ENCODE measurements at regions of chr2 and their contacts with region 1.

Region 1: DNA sequence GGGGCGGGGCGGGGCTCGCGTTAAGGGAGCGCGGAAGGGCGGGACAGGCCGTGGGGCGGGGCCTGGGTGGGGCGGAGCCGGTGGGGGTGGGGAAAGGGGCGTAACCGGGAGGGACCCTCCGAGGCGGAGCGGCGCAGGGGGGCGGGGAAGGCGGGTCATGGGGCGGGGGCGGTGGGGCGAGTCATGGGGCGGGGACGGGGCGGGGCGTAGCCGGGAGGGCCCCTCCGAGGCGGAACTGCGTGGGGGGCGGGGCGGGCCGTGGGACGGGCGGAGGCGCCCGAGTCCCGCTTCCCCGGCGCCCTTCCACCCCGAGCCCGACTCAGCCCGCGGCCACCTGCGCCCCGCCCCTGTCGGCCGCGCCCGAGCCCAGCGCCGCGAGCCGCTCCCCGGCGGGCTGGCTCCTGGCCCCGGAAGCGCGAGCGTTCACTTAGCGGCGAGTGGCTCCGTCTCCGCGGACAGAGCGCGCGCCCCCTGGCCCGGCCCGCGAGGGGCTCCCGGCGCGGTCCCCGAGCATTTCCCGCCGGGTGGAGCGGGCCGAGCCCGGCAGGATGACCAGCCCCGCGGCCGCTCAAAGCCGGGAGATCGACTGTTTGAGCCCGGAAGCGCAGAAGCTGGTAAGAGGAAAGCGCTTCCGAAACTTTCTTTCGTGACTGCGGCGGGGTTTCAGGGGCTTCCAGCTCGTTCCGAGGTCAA is 64.7 kb downstream of the LRRFIP1 start:
- DNase-seq: peak; percentile 84
- H3K4me3 ChIP-seq: peak overlapping the region; percentile 84 to 94 (median 93)
- H3K27ac ChIP-seq: peak overlapping the region; percentile 99
- H3K4me1 ChIP-seq: peaks cover 72% of the 10 kb centered on the region
- H3K27me3 ChIP-seq: no peaks in the 10 kb centered on the region
- CTCF ChIP-seq: no peak

Region 2: DNA sequence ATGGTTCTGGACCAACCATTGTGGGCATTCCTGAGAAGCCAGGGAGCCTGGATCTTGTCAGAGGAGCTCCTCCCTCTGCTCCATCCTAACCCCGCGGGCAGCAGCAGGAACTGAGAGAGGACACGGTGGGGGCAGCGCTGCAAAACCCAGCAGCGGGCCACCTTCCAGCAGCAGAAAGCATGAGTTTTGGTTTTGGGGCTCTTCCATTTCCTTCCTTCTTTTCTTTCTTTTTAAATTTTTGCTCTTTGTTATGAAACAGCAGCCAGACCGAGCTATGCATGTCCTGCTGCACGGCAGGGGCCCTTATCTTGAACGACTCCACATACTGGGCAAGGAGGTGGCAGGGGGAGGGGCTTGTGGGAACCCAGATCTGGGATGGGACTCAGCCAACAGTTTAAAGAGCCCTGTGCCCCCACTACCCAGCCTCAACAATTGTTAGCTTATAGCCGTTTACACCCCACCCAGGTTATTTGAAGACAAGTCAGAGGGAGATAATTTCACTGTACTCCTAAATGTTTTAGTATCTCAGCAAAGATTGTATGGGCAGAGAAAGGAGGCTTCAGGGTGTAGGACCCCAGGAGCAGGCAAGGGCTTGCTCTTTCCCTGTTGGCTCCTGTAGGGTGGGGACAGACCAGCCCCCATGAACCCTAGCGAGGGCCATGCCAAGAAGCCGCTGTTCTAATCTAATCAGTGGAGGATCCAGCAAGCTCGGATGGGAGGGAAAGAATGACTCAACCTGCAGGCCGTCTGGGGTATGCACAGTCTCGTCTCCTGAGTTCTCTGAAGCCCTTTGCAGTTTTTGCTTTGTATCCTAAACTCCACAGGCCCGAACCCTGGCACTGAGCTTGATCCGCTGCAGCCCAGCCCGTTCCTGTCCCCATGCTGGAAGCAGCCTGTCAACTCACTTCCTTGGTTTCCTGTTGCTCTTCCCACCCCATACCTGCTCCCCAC is 10.7 kb after region 1 on chr2:
- CTCF ChIA-PET with region 1: no interaction called
- dilution Hi-C with region 1: no loop called
- in situ Hi-C with region 1: no loop called
- intact Hi-C with region 1: loop called (anchors 1 kb)
- DNase-seq: peak; percentile 46
- H3K4me3 ChIP-seq: peak overlapping the region in 1 of 3 experiments; percentile 0
- H3K27ac ChIP-seq: peak overlapping the region; percentile 65
- H3K4me1 ChIP-seq: peaks cover 58% of the 10 kb centered on the region
- H3K27me3 ChIP-seq: no peaks in the 10 kb centered on the region
- CTCF ChIP-seq: no peak

Measured in mammary epithelial cell (primary cell).